Ascending aorta (tissue), 2 donors: ENCODE measurements at regions of chr17 and their contacts with region 1.

Region 1: DNA sequence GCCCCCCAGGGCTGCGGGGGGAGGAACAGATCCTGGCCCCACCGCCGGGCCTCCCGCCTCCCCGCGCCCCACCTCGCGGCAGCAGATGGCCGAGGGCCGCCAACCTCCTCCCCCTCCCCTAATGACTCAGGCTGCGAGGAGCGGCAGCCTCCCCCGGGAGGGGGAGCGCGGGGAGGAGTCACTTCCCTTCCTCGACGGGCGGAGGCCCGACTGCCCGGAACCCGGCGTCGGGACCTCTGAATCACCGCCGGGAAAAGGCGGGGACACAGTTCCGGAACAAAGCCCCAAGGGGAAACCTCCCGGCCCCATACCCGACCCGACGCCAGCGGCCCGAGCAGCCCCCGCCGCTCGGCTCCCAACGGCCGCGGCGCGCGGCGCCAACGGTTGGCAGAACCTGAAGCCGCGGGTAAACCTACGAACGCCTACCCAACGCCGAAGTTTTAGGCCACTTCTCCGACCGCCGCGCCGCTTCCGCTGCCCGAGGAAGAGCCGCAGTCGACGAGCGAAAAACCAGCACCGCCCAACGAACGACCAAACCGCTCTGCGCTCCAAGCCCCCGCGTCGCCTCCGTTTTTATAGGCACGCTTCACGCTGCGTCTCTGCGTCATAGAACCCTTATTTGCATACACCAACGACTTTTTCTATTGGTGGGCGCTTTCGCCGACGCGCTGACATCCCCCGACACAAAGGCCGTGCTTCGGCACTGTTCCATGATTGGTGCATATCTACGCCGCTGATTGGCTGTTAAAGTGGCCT is 5.2 kb upstream of the UNK start:
- DNase-seq: peak; percentile 95 to 99
- H3K4me3 ChIP-seq: peak overlapping the region; percentile 86 to 91
- H3K27ac ChIP-seq: peak overlapping the region; percentile 97 to 99
- H3K4me1 ChIP-seq: peaks cover 0 to 41% of the 10 kb centered on the region in 2 donors
- H3K27me3 ChIP-seq: no peaks in the 10 kb centered on the region
- CTCF ChIP-seq: peak in 1 of 3 experiments; percentile 5

Region 2: DNA sequence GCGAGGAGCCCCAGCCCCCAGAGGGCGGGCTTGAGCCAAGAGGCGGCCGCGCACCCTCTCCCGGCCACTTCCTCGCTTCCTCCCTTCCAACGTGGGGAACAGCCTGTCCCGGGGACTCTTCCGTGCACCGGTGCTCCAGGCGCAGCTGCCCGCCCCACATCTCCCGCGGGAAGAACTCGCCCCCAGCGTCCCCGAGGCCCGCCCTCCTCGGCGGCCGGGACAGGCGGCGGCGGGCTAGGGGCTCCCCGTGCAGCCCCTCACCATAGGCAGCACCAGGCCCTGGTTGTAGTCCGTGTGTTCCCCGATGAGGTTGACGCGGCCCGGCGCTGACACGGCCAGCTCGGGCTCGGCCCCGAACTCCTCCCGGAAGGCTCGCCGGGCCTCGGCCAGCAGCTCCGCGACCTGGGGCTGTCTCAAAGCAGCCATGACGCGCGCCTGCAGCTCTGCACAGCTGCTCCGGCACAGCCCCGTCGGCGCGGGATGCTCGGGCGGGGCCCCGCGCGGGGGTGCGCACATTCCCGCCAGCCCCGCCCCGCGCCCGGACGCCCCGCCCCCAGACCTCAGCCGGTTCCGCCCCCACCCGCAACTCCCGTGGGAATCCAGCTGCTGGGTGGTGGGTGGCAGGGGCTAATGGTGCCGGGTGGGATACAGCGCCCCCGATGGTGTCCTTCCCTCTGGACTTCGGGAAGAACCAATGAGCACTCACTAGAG is 14.5 kb before region 1 on chr17 and contains the start of gene GALK1:
- intact Hi-C with region 1: loop called (anchors 1 kb)
- DNase-seq: peak in 1 of 2 donors; percentile 86
- H3K4me3 ChIP-seq: peak within 1 kb of the TSS; percentile 67 to 85
- H3K27ac ChIP-seq: peak within 1 kb of the TSS; percentile 84 to 85
- H3K4me1 ChIP-seq: peaks cover 4 to 18% of the 10 kb centered on the region in 2 donors
- H3K27me3 ChIP-seq: no peaks in the 10 kb centered on the region
- CTCF ChIP-seq: peak; percentile 40 to 66 (median 58)
- total RNA-seq, gene GALK1: 101 TPM